A549 (cell line): ENCODE measurements at regions of chr9 and their contacts with region 1.

Region 1: DNA sequence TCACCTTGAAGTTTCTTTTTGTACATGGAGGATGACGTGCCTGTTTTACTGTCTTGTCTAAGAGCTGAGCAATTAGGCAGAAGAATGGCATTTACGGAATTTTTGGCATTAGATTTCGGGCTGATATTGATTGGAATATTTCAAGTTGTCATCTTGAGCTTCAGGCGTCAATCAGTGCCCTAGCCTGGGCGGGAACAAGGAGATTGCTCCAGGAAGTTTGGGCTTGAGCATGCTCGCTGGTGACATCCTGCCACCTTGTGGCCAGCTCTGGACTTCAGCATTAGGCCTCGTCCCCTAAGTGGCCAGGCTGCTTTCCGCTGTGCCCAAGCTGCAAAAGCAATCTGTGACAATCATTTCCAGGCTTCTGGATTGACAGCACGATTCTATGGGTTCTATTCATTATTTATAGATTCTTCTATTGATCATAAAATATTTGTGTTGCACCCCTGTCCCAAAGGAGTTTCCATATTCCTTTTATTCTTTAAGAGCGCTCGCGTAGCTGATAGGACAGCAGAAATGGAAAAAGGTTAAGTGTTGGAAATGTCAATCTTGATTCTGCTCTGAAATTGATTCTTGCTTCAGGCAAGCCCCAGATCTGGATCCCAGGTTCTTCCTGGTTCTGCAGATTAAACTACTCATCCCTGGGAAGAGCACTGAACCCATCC is 79.3 kb downstream of the SLC28A3 start:
- DNase-seq: peak; percentile 70 to 82
- ATAC-seq: peak; percentile 93 to 99
- H3K4me3 ChIP-seq: no peak overlapping the region
- H3K27ac ChIP-seq: no peak overlapping the region
- H3K4me1 ChIP-seq: no peaks in the 10 kb centered on the region
- CTCF ChIP-seq: peak; percentile 82
- EP300 ChIP-seq: no peak
- POLR2A ChIP-seq: no peak
- RAD21 ChIP-seq: peak; percentile 83 to 91

Region 2: DNA sequence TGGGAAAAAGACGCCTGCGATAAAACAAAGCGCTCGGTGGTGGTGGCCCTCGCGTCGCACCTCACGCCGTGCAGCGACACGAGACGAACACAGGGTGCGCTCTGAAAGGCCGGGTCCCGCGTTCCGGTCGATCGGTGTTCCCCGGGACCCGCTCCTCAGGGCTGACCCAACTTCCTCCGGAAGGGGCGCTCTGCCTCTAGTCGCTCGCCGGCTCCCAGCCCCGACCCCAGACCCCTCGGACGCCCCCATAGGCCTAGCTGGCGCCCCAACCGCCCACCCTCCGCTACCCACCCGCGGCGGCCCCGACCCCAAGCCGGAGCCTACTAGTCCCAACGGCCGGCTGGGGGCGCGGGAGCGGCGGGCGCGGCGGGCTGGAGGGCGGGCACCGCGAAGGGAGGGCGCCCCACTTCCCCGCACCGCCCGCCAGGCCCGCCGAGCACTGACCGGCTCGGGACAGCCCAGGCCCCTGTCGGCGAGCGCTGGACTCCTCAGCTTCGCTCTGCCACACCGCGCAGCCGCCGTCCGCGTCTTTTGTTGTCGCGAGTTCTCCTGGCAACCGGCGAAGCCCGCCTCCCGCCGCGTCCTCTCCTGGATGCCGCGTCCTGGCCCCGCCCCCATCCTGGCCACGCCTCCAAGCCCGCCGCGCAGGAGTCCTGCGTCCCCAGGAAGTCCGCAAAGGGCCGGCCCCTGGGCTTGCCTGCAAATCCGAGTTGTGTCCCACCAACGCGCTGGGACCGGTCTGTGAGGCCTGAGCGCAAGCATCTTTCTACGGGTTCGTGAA is 340.1 kb before region 1 on chr9 and contains the start of gene KIF27:
- CTCF ChIA-PET with region 1: interaction called, 21 read pairs
- POLR2A ChIA-PET with region 1: interaction called, 4 read pairs
- DNase-seq: peak; percentile 88 to 98
- ATAC-seq: peak; percentile 90 to 97
- H3K4me3 ChIP-seq: peak within 1 kb of the TSS; percentile 81
- H3K27ac ChIP-seq: peak within 1 kb of the TSS; percentile 93 to 97
- H3K4me1 ChIP-seq: peaks cover 7% of the 10 kb centered on the region; the same call in 2 of the 3 replicates
- CTCF ChIP-seq: peak; percentile 50
- EP300 ChIP-seq: no peak
- POLR2A ChIP-seq: peak; percentile 85
- RAD21 ChIP-seq: no peak; a peak in 3 of 5 replicates
- polyA plus RNA-seq, gene KIF27: 4.1 and 6.0 TPM in 2 replicates

Region 3: DNA sequence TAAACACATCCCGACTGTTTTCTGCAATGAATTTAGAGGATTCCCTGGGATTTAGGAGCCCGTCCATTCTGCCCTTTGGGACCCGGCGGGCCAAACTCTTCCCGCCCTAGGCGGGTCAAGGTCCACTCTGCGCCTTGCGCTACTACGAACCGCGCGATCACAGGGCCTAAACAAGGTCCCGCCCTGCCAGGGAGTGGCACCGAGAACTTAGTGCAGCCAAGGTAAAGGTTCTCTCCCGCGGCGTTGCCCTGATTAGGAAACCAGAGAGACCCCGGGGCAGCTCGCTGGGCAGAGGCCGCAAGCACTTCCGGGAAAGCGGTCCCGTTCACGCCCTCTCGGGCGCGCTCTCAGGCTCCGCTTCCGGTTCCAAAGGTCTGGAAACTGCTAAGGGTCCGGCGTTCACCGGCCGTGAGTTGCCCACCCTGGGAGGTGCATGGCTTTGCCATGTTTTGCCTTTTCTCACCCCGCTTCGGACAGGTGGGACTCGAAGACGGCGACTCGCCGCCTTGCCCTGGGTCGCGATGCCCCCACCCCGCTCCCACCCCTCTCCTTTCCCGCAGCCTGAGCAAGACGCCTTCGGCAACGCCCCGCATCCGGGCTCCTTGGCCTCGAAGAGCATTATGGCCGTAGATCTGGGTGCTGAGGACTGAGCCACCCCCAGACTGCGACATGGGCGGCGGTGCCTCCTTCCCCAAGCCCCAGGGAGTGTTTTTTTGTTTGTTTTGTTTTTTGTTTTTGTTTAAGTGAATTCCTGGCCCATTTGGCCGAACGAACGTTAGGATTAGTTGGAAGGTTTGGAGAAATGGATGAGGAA is 304.6 kb before region 1 on chr9:
- CTCF ChIA-PET with region 1: interaction called, 11 read pairs
- POLR2A ChIA-PET with region 1: interaction called, 3 read pairs
- DNase-seq: peak; percentile 82 to 85
- ATAC-seq: peak; percentile 94 to 95
- H3K4me3 ChIP-seq: peak overlapping the region; percentile 52
- H3K27ac ChIP-seq: peak overlapping the region; percentile 94 to 95
- H3K4me1 ChIP-seq: peaks cover 26% of the 10 kb centered on the region; the same call in 2 of the 3 replicates
- CTCF ChIP-seq: no peak
- EP300 ChIP-seq: no peak
- POLR2A ChIP-seq: peak; percentile 57
- RAD21 ChIP-seq: no peak

Region 4: GRCh38 chr9:83992421-83992820 is 268.8 kb before region 1 on chr9:
- CTCF ChIA-PET with region 1: interaction called, 10 read pairs
- POLR2A ChIA-PET with region 1: no interaction called
- DNase-seq: peak in 1 of 2 experiments; percentile 53
- ATAC-seq: peak; percentile 50 to 70; a peak in 4 of 6 replicates
- H3K4me3 ChIP-seq: no peak overlapping the region
- H3K27ac ChIP-seq: 0 out of 6 replicates have a peak overlapping the region, but pooled peaks of 1 of the 2 experiments have one; percentile 24
- H3K4me1 ChIP-seq: peaks cover 12% of the 10 kb centered on the region; the same call in 2 of the 3 replicates
- CTCF ChIP-seq: peak; percentile 19; the same call in 2 of the 3 replicates
- EP300 ChIP-seq: no peak
- POLR2A ChIP-seq: no peak
- RAD21 ChIP-seq: peak; percentile 24 to 30; a peak in 3 of 5 replicates

Region 5: DNA sequence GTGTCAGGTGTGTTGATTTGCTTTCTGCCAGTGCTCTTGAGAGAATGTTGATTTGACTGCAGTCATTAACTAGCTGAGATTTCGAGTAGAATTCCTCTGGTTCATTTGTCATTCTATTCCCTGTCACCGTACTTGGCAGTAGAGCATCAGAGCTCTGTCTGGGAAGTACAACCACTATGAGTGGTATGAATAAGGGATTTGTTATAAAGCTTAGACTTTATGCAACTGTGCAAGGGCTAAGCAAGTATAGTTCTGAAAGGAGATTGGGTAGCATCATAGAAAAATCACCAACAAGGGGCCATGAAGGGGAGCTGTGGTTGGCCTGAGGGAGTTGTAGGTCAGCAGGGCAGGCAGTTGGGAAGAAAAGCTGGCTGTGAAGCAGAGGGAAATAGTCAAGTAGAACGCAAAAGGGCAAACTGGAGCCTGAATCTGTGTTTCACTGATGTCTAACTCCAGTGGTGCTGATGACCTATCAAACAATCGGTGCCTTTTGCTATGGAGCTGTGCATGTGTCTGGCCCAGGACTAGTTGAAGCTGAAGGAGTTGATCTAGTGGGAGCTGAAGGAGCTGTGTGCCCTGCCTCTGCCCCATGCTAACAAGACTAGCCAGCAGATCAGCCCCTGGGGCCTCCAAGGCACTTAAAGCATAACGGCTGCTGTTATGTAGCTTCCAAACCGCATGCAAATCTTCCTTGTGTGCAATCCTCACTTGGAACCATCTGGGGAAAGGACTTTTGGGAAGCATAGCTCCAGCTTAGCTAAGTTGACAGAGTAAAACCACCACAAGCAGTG is 30.7 kb before region 1 on chr9:
- CTCF ChIA-PET with region 1: interaction called, 16 read pairs
- POLR2A ChIA-PET with region 1: no interaction called
- DNase-seq: no peak
- ATAC-seq: no peak
- H3K4me3 ChIP-seq: no peak overlapping the region
- H3K27ac ChIP-seq: no peak overlapping the region
- H3K4me1 ChIP-seq: no peaks in the 10 kb centered on the region
- CTCF ChIP-seq: no peak
- EP300 ChIP-seq: no peak
- POLR2A ChIP-seq: no peak
- RAD21 ChIP-seq: no peak

Region 6: GRCh38 chr9:84271531-84271900 is 10.3 kb after region 1 on chr9:
- CTCF ChIA-PET with region 1: interaction called, 14 read pairs
- POLR2A ChIA-PET with region 1: no interaction called
- DNase-seq: no peak
- ATAC-seq: no peak
- H3K4me3 ChIP-seq: no peak overlapping the region
- H3K27ac ChIP-seq: no peak overlapping the region
- H3K4me1 ChIP-seq: no peaks in the 10 kb centered on the region
- CTCF ChIP-seq: no peak
- EP300 ChIP-seq: no peak
- POLR2A ChIP-seq: no peak
- RAD21 ChIP-seq: no peak

Region 7: GRCh38 chr9:84293001-84293798 is 32.0 kb after region 1 on chr9:
- CTCF ChIA-PET with region 1: interaction called, 18 read pairs
- POLR2A ChIA-PET with region 1: no interaction called
- DNase-seq: no peak
- ATAC-seq: no peak
- H3K4me3 ChIP-seq: no peak overlapping the region
- H3K27ac ChIP-seq: no peak overlapping the region
- H3K4me1 ChIP-seq: 0 out of 3 replicates have a peak, but pooled peaks cover 3% of the 10 kb centered on the region
- CTCF ChIP-seq: no peak
- EP300 ChIP-seq: no peak
- POLR2A ChIP-seq: no peak
- RAD21 ChIP-seq: no peak

Region 8: DNA sequence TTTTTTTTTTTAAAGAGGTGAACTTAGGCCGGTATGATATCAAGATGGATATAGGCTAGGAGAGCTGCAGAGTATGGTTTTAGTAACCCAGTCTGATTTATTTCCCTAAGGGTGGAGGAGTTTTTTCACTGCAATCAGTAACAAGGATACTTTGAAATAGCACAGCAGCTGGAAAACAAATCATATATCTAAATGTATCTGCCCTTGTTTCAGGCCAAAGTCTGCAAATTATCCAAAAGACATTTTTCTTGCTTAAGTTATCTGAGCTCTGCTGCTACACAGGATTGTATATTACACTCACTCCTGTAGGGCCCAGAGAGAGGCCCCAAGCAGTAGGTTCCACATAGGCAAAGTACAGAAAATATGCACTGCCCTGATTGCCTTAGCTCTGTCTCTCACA is 630.7 kb after region 1 on chr9:
- CTCF ChIA-PET with region 1: no interaction called
- POLR2A ChIA-PET with region 1: no interaction called
- DNase-seq: no peak
- ATAC-seq: no peak
- H3K4me3 ChIP-seq: no peak overlapping the region
- H3K27ac ChIP-seq: no peak overlapping the region
- H3K4me1 ChIP-seq: no peaks in the 10 kb centered on the region
- CTCF ChIP-seq: no peak
- EP300 ChIP-seq: no peak
- POLR2A ChIP-seq: no peak
- RAD21 ChIP-seq: no peak